A673 (cell line): ENCODE measurements at regions of chr2 and their contacts with region 1.

Region 1: DNA sequence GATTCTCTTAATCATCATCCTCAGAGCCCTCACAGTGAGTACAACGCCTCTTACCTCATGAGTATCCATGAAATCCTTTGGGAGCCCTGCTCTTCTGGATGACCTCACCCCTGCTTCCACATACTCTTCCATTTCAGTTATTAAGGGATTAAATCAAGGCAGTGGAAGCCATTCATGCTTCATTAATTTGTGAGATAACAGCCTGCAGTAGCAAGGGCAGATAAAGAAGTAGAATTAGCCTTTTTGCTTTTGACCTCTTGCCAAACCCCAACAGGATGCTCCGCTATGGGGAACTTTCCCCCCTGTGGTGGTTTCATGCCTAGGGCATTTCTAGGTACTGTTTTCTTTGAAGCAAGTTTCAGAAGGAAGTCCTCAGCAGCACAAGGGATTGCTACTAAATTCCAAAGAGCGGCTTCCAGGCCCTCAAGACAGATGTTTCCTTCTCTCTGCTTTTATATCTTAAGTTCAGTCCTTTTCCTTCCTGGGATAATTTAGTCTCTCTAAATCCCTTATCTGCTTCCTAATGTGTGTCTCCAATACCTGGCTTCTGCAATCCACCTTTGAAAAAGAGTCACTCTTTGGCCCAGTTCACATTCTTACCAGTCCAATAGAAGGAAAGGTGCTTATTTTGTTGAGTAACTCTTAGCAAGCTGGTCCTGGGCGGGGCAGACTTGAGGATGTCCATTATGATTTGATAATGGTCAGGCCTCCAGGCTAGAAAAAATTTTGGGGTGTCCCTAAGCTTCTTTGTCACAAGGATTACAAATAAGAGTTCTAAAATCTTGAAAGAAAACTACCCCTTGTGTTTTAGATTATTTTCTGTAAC is 76.9 kb downstream of the MYO1B start:
- DNase-seq: peak; percentile 99
- H3K4me3 ChIP-seq: no peak overlapping the region
- H3K27ac ChIP-seq: peak overlapping the region; percentile 13
- H3K4me1 ChIP-seq: peaks cover 51% of the 10 kb centered on the region
- H3K27me3 ChIP-seq: no peaks in the 10 kb centered on the region
- CTCF ChIP-seq: no peak

Region 2: GRCh38 chr2:191245046-191245868 is 76.8 kb before region 1 on chr2 and contains the start of gene MYO1B:
- CTCF ChIA-PET with region 1: no interaction called
- POLR2A ChIA-PET with region 1: no interaction called
- intact Hi-C with region 1: loop called (anchors 5 kb)
- DNase-seq: peak; percentile 64
- H3K4me3 ChIP-seq: peak within 1 kb of the TSS; percentile 71
- H3K27ac ChIP-seq: peak within 1 kb of the TSS; percentile 70
- H3K4me1 ChIP-seq: peaks cover 15% of the 10 kb centered on the region
- H3K27me3 ChIP-seq: no peaks in the 10 kb centered on the region
- CTCF ChIP-seq: peak; percentile 56
- total RNA-seq, gene MYO1B: 37.8 and 48.3 TPM in 2 replicates